Calu3 (cell line): ENCODE measurements at regions of chr2 and their contacts with region 1.

Region 1: GRCh38 chr2:169933124-169933711 is 106.0 kb downstream of the UBR3 start:
- DNase-seq: no peak
- H3K4me3 Mint-ChIP-seq: no peak overlapping the region
- H3K27ac Mint-ChIP-seq: no peak overlapping the region
- H3K4me1 Mint-ChIP-seq: no peaks in the 10 kb centered on the region
- H3K27me3 Mint-ChIP-seq: no peaks in the 10 kb centered on the region
- CTCF ChIP-seq: no peak

Region 2: GRCh38 chr2:169528271-169528701 is 404.9 kb before region 1 on chr2:
- CTCF ChIA-PET with region 1: no interaction called
- intact Hi-C with region 1: loop called (anchors 5 kb)
- DNase-seq: peak; percentile 80
- H3K4me3 Mint-ChIP-seq: no peak overlapping the region
- H3K27ac Mint-ChIP-seq: no peak overlapping the region
- H3K4me1 Mint-ChIP-seq: no peaks in the 10 kb centered on the region
- H3K27me3 Mint-ChIP-seq: no peaks in the 10 kb centered on the region
- CTCF ChIP-seq: peak; percentile 80

Region 3: DNA sequence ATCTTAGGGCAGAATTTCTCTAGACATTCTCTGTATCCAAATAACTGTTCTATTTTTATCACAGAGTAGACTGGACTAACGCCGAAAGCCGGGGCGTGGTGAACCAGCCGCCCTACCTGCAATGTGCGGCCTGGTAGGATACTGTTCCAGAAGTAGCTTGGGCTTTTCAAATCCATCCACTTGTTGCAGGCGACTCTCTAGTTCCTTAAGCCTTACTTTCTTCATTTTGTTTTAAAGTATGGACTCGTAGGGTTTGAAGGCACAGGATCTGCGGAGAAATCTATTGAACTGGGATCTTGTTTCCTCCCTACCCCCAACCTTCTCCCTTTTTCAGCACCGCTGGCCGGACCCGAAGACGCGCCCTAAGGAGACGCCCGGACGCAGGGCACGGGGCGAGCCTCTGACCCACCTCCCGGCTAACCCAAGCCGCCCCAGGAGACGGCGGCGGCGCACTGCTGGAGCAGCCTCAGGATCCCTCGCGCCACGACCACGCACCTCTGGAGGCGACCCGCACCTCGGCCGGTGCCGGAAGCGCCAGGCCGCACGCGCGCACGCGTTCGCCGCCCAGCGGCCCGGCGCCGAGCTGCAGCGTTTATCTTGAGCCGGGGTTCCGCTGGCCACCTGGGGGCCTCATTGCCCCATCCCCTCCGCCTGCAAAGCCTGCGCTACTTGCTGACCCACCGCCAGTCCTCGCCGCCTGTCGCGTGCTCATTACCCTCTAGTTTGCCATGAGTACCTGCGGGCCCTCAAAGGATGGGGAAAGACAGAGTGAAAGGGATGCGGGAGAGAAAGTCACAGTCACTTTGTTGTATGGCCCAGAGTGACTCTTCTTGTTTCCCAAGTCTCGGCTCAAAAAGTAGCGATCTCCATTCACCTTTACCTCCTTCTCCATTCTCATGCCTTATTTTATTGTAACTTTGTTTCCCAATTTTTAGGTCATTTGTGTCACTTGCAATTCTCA is 108.6 kb before region 1 on chr2 and contains the start of gene METTL5:
- CTCF ChIA-PET with region 1: no interaction called
- intact Hi-C with region 1: loop called (anchors 2 kb)
- DNase-seq: peak; percentile 91
- H3K4me3 Mint-ChIP-seq: peak within 1 kb of the TSS; percentile 90
- H3K27ac Mint-ChIP-seq: peak within 1 kb of the TSS; percentile 40
- H3K4me1 Mint-ChIP-seq: peaks cover 44% of the 10 kb centered on the region
- H3K27me3 Mint-ChIP-seq: no peaks in the 10 kb centered on the region
- CTCF ChIP-seq: peak; percentile 98
- total RNA-seq, gene METTL5: 63.1 and 68.2 TPM in 2 replicates

Region 4: GRCh38 chr2:170235860-170236679 is 302.9 kb after region 1 on chr2:
- CTCF ChIA-PET with region 1: no interaction called
- intact Hi-C with region 1: loop called (anchors 10 kb)
- DNase-seq: peak; percentile 45
- H3K4me3 Mint-ChIP-seq: no peak overlapping the region
- H3K27ac Mint-ChIP-seq: no peak overlapping the region
- H3K4me1 Mint-ChIP-seq: no peaks in the 10 kb centered on the region
- H3K27me3 Mint-ChIP-seq: no peaks in the 10 kb centered on the region
- CTCF ChIP-seq: peak; percentile 40

Region 5: DNA sequence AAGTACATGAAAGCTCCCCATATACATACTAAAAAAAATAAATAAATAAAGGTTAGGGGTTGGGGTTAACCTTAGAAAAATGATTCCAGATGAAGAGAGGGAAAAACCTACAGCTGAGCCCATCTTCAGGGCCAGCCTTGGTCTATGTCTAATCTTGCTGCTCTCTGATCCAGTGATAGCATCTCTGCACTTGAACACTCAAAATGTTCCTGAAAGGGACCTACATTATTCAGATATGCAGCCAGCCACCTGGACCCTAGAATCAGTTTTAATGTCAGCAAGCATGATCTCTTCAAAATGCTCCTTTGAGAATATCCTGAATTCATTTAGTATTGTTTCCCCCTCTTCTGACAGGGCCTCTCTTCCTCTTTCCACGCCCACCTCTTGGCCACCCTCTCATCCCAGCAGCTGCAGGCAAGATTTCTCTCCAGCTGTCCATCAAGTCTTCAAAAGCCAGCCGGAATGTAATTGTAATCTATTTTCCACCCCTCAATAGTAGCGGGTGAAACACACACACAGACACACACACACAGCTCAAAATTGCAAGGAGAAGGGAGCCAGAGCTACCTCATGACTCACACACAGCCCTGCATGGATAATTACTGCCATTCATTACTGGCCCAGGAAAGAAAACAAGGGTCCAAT is 380.3 kb after region 1 on chr2:
- CTCF ChIA-PET with region 1: no interaction called
- intact Hi-C with region 1: loop called (anchors 10 kb)
- DNase-seq: no peak
- H3K4me3 Mint-ChIP-seq: no peak overlapping the region
- H3K27ac Mint-ChIP-seq: no peak overlapping the region
- H3K4me1 Mint-ChIP-seq: peaks cover 9% of the 10 kb centered on the region
- H3K27me3 Mint-ChIP-seq: no peaks in the 10 kb centered on the region
- CTCF ChIP-seq: no peak

Region 6: DNA sequence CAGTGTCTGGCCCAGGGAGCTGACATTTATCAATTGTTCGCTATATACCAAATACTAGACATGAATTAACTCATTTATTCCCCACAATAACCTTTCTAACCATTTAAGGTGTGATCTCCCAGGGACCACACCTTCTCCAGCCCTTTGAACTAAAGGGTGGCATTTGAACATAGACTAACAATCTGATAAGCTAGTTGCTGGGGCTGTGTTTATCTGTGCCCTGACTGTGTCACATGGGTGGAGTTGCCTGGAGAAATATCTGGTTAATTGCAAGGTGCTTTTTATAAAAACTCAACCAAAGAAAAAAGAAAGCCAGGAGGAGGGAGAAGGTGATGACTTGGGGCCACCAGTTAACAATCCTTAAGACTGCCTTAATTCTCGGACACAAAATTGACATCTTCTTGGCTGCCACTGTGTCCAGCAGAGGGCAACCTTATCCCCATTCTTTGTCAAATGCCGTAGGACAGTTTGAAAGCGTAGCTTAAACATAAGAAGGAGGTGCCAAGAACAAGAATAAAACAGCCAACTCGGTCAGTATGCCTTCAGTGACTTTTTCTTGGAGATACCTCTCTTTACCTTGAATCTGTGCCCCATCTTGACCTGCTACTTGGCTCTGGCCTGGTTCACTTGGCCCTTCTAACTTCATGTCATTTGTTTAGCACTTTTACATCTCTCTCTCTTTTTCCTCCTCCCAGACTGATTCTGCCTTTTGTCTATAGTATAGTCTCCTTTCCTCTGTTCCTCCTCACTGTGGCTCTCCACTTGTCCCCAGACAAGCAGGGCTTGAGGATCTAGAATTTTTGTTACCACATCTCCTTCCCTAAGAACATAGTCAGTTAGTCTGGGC is 428.1 kb after region 1 on chr2:
- CTCF ChIA-PET with region 1: no interaction called
- intact Hi-C with region 1: loop called (anchors 10 kb)
- DNase-seq: peak; percentile 56
- H3K4me3 Mint-ChIP-seq: no peak overlapping the region
- H3K27ac Mint-ChIP-seq: no peak overlapping the region
- H3K4me1 Mint-ChIP-seq: peaks cover 10% of the 10 kb centered on the region
- H3K27me3 Mint-ChIP-seq: peaks cover 18% of the 10 kb centered on the region
- CTCF ChIP-seq: peak; percentile 65